ENCODE measurements at regions of chr4 and their contacts with region 1.

Region 1: GRCh38 chr4:94621491-94622080 is 136.2 kb upstream of the BMPR1B start:
- DNase-seq: peak; percentile 64
- H3K4me3 ChIP-seq: no peak overlapping the region
- H3K27ac ChIP-seq: peak overlapping the region; percentile 7
- H3K4me1 ChIP-seq: no peaks in the 10 kb centered on the region
- H3K27me3 ChIP-seq: no peaks in the 10 kb centered on the region
- CTCF ChIP-seq: peak; percentile 43 to 55
- POLR2A ChIP-seq: no peak

Region 2: GRCh38 chr4:94399721-94400120 is 221.9 kb before region 1 on chr4:
- CTCF ChIA-PET with region 1: no interaction called
- POLR2A ChIA-PET with region 1: no interaction called
- dilution Hi-C with region 1: no loop called
- intact Hi-C with region 1: no loop called
- DNase-seq: no peak
- H3K4me3 ChIP-seq: no peak overlapping the region
- H3K27ac ChIP-seq: no peak overlapping the region
- H3K4me1 ChIP-seq: no peaks in the 10 kb centered on the region
- H3K27me3 ChIP-seq: no peaks in the 10 kb centered on the region
- CTCF ChIP-seq: no peak
- POLR2A ChIP-seq: no peak

Region 3: GRCh38 chr4:94728056-94728766 is 106.6 kb after region 1 on chr4:
- CTCF ChIA-PET with region 1: interaction called, 14 read pairs
- POLR2A ChIA-PET with region 1: no interaction called
- dilution Hi-C with region 1: no loop called
- intact Hi-C with region 1: loop called (anchors 2 kb)
- DNase-seq: no peak
- H3K4me3 ChIP-seq: no peak overlapping the region
- H3K27ac ChIP-seq: no peak overlapping the region
- H3K4me1 ChIP-seq: no peaks in the 10 kb centered on the region
- H3K27me3 ChIP-seq: no peaks in the 10 kb centered on the region
- CTCF ChIP-seq: no peak
- POLR2A ChIP-seq: no peak

Region 4: DNA sequence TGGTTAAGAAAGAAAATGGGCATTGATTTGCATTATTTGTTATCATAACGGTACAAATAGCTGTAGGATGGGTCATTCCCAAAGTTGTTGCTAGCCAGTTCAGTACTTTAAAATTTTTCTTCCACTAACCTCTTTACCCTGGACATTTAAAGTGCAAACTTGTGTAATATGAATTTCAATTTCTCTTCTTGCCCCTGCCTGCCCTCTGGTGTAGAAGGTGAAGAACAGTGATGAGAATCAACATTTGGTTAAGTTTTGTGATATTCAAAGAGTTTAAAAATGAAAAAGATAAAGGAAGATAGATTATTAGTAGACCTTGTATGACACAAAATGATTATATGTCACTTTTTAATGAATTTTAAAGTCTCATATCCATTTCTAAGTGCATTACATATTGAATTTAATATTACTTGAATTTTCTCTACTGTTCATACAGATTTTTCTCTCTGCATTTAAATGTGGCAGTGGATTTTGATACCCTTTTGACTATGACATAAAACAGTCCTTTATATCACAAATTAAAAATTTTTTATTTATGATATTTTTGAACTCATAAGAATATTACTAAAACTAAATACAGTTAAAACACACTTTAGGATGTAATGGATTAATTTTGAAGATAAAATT is 473.9 kb after region 1 on chr4:
- CTCF ChIA-PET with region 1: interaction called, 32 read pairs
- POLR2A ChIA-PET with region 1: no interaction called
- dilution Hi-C with region 1: no loop called
- intact Hi-C with region 1: loop called (anchors 1 kb)
- DNase-seq: peak; percentile 58
- H3K4me3 ChIP-seq: no peak overlapping the region
- H3K27ac ChIP-seq: no peak overlapping the region
- H3K4me1 ChIP-seq: no peaks in the 10 kb centered on the region
- H3K27me3 ChIP-seq: no peaks in the 10 kb centered on the region
- CTCF ChIP-seq: peak; percentile 34 to 35
- POLR2A ChIP-seq: no peak

Region 5: GRCh38 chr4:95124906-95125504 is 503.4 kb after region 1 on chr4:
- CTCF ChIA-PET with region 1: interaction called, 77 read pairs
- POLR2A ChIA-PET with region 1: no interaction called
- dilution Hi-C with region 1: no loop called
- intact Hi-C with region 1: loop called (anchors 1 kb)
- DNase-seq: peak; percentile 68
- H3K4me3 ChIP-seq: no peak overlapping the region
- H3K27ac ChIP-seq: no peak overlapping the region
- H3K4me1 ChIP-seq: peaks cover 14% of the 10 kb centered on the region
- H3K27me3 ChIP-seq: no peaks in the 10 kb centered on the region
- CTCF ChIP-seq: peak; percentile 53 to 55
- POLR2A ChIP-seq: no peak